Adrenal gland (tissue), 19 donors: ENCODE measurements at regions of chr11 and their contacts with region 1.

Region 1: DNA sequence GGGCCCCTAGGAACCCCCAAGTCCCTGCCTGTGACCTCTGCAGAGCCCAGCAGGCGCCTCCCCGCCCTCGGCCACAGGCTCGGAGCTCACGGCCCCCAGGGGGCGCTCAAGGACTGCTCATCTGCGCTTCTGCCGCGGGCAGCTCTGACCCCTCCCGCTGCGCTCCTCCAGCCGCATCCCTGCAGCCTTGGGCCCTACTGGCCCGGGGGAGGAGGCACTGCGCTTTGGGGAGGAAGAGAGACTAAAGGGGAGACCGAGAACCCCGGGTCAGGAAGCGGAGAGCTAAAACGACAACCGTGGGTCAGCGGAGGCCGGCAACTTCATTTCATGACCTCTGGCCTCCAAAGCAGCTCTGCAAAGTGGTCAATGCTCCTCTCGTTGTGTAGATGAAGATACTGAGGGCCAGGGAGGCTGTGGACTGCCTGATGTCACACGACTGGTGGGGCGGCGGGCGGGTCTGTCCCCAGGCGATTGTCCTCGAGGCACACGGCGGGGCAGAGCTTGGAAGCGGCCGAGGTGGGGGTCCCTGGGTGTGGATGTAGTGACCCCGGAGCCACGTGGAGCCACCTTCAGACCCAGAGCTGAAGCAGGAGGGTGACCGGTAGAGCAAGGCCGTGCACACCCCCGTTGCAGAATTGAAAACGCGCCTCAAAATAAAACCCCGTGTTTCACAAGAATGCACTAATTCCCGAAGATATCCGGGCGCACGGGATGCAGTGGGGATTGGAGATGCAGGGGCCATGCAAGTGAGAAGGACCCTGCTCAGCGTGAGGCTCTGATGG is 2.7 kb upstream of the KRTAP5-6 start:
- DNase-seq: peak; percentile 82 to 92 (median 90)
- H3K4me3 ChIP-seq: peak overlapping the region in 1 of 4 donors; percentile 21
- H3K27ac ChIP-seq: no peak overlapping the region
- H3K4me1 ChIP-seq: peaks cover 7 to 11% of the 10 kb centered on the region in 2 donors
- H3K27me3 ChIP-seq: no peaks in the 10 kb centered on the region
- CTCF ChIP-seq: peak; percentile 91 to 96 (median 94)
- POLR2A ChIP-seq: no peak

Region 2: DNA sequence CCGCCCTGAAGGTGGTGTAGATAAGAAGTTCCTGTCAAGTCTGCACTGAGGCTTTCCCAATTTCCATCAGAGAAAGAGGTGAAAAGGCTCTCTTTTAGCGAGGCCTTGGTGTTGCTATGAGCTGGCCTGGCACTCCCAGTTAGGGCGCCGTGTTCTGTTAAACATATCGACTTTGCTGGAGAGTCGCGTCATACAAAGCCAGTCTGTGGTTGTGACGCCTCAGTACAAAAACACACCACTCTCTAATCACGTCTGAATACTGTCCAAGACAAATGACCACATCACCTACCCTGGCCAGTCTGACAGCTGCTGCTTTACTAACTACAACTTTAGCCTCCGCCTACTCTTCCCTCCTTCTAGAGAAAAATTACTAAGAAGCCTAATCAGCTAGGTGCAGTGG is 376.8 kb before region 1 on chr11:
- intact Hi-C with region 1: no loop called
- DNase-seq: no peak
- H3K4me3 ChIP-seq: no peak overlapping the region
- H3K27ac ChIP-seq: no peak overlapping the region
- H3K4me1 ChIP-seq: no peaks in the 10 kb centered on the region
- H3K27me3 ChIP-seq: no peaks in the 10 kb centered on the region
- CTCF ChIP-seq: no peak
- POLR2A ChIP-seq: no peak

Region 3: DNA sequence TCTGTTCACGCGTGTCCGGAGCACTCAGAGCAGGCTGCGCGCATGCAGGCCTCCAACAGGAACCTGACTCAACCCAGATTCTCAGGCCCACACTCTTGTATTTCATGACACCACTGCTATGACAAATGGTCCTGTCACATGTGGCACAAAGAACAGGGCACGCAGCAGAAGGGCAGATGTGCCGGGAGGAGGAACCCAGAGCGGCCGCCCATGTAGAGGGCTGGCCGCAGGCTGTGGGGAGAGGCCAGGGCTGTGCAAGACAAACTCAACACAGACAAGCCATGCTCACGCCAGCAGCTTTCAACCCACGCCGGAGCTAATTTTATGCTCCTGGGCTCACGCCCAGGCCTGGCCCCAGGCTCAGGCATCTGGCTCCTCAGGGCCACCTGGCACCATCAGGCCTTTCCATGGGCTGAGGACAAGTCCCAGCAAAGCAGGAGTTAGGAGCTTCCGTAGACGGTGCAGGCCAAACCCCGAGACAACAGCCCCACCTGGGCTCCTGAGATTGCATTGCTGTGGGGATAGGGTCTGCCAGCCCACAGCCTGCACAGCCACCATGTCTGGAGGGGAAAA is 162.2 kb before region 1 on chr11:
- intact Hi-C with region 1: no loop called
- DNase-seq: peak; percentile 66 to 91 (median 82)
- H3K4me3 ChIP-seq: no peak overlapping the region
- H3K27ac ChIP-seq: peak overlapping the region in 4 of 5 donors; percentile 60 to 86 (median 74)
- H3K4me1 ChIP-seq: peaks cover 12 to 48% of the 10 kb centered on the region in 2 donors
- H3K27me3 ChIP-seq: no peaks in the 10 kb centered on the region
- CTCF ChIP-seq: no peak
- POLR2A ChIP-seq: peak in 1 of 2 donors; percentile 76

Region 4: DNA sequence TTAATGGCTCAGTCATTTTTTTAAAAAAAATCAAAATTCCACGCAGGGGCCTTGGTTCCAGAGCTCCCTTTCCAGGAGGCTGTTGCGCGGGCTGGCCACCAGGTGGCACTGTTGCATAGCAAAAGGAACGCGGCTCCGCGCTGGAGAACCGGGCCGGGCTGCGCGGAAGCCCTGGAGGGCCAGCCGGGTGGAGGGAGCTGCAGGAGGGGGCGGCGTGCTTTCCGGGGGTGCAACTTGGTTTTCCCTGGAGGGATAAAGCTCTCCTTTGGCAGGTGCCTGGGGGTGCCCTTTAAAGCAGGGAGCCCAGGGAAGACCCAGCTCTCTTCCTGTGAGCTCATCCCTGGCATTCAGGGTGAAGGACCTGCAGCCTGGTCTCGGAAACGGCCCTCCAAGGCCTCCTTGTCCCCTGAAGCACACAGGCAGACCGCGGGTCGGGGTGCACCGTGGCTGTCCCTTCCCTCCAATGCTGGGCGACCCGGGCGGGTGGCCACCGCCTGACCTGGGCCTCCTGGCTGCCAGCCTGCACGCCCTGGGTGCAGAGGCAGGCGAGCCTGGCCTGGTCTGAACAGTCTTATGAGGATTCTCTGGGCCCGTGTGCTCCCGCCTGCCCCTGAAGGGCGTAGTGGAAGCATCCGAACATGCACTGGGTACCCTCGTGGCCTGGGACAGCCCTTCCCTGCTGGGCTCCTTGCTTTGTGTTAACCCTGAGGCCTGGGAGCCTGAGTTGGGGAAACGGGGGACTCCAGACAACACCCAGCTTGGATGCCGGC is 41.3 kb before region 1 on chr11:
- intact Hi-C with region 1: loop called (anchors 5 kb)
- DNase-seq: peak; percentile 63 to 88 (median 81)
- H3K4me3 ChIP-seq: no peak overlapping the region
- H3K27ac ChIP-seq: no peak overlapping the region
- H3K4me1 ChIP-seq: peaks cover 0 to 15% of the 10 kb centered on the region in 2 donors
- H3K27me3 ChIP-seq: peaks cover 5% of the 10 kb centered on the region
- CTCF ChIP-seq: peak; percentile 91 to 99 (median 96)
- POLR2A ChIP-seq: no peak

Region 5: GRCh38 chr11:1728931-1729691 is 34.9 kb after region 1 on chr11:
- intact Hi-C with region 1: no loop called
- DNase-seq: peak in 4 of 7 donors; percentile 11 to 49 (median 22)
- H3K4me3 ChIP-seq: no peak overlapping the region
- H3K27ac ChIP-seq: no peak overlapping the region
- H3K4me1 ChIP-seq: no peaks in the 10 kb centered on the region
- H3K27me3 ChIP-seq: peaks cover 23% of the 10 kb centered on the region
- CTCF ChIP-seq: no peak
- POLR2A ChIP-seq: no peak